Endothelial cell of umbilical vein (primary cell): ENCODE measurements at regions of chr5 and their contacts with region 1.

Region 1: DNA sequence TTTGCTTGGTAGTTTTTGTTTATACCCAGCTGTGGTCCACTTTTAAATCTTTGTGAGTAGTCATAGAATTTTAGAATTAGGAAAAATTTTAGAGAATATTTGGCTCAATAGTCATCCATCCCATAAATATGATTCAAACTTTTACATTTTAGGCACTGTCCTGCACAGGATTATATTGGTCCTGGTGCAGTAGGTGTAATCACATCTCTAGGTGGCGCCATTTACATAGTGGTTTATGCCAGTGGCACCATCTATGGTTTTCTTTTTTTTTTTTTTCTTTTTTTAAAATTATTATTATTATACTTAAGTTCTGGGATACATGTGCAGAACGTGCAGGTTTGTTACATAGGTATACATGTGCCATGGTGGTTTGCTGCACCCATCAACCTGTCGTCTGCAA is 260.7 kb upstream of the KCNN2 start:
- DNase-seq: peak; percentile 37
- H3K4me3 ChIP-seq: no peak overlapping the region
- H3K27ac ChIP-seq: no peak overlapping the region
- H3K4me1 ChIP-seq: no peaks in the 10 kb centered on the region
- H3K27me3 ChIP-seq: no peaks in the 10 kb centered on the region
- CTCF ChIP-seq: peak; percentile 42 to 45
- POLR2A ChIP-seq: no peak

Region 2: GRCh38 chr5:113806250-113806649 is 294.9 kb before region 1 on chr5:
- CTCF ChIA-PET with region 1: interaction called, 3 read pairs
- POLR2A ChIA-PET with region 1: no interaction called
- dilution Hi-C with region 1: no loop called
- intact Hi-C with region 1: loop called (anchors 1 kb)
- DNase-seq: peak; percentile 71
- H3K4me3 ChIP-seq: peak overlapping the region in 1 of 3 experiments; percentile 24
- H3K27ac ChIP-seq: peak overlapping the region; percentile 2
- H3K4me1 ChIP-seq: peaks cover 14% of the 10 kb centered on the region
- H3K27me3 ChIP-seq: no peaks in the 10 kb centered on the region
- CTCF ChIP-seq: peak; percentile 34 to 38
- POLR2A ChIP-seq: no peak

Region 3: DNA sequence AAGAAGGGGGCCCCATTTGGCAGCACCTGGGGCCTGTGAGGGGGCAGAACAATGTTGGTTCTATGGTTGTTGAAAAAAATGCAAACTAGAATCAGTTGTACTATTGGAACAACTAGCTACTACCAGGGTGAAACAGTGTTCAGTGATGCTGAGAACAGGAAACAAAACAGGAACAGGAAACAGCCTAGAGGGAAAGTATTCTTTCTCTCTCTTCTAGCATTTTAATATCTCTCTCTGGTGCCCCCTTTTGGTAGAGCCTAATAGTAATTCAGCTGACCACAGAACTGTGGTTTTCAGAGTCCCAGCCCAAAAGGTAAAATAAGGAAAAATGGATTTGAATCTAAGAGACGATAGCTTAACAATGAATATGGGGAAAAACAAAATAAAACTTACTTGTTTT is 122.7 kb after region 1 on chr5:
- CTCF ChIA-PET with region 1: interaction called, 8 read pairs
- POLR2A ChIA-PET with region 1: no interaction called
- dilution Hi-C with region 1: no loop called
- intact Hi-C with region 1: loop called (anchors 1 kb)
- DNase-seq: peak; percentile 53
- H3K4me3 ChIP-seq: no peak overlapping the region
- H3K27ac ChIP-seq: no peak overlapping the region
- H3K4me1 ChIP-seq: no peaks in the 10 kb centered on the region
- H3K27me3 ChIP-seq: no peaks in the 10 kb centered on the region
- CTCF ChIP-seq: peak; percentile 41 to 53
- POLR2A ChIP-seq: no peak

Region 4: GRCh38 chr5:114305402-114306211 is 204.5 kb after region 1 on chr5:
- CTCF ChIA-PET with region 1: interaction called, 5 read pairs
- POLR2A ChIA-PET with region 1: no interaction called
- dilution Hi-C with region 1: no loop called
- intact Hi-C with region 1: loop called (anchors 1 kb)
- DNase-seq: peak; percentile 41
- H3K4me3 ChIP-seq: no peak overlapping the region
- H3K27ac ChIP-seq: no peak overlapping the region
- H3K4me1 ChIP-seq: no peaks in the 10 kb centered on the region
- H3K27me3 ChIP-seq: peaks cover 4 to 5% of the 10 kb centered on the region in 2 experiments
- CTCF ChIP-seq: peak in 1 of 2 donors; percentile 32
- POLR2A ChIP-seq: no peak

Region 5: GRCh38 chr5:114361724-114362196 is 260.6 kb after region 1 on chr5 and contains the start of gene KCNN2:
- CTCF ChIA-PET with region 1: interaction called, 22 read pairs
- POLR2A ChIA-PET with region 1: no interaction called
- dilution Hi-C with region 1: no loop called
- intact Hi-C with region 1: loop called (anchors 2 kb)
- DNase-seq: peak; percentile 71
- H3K4me3 ChIP-seq: peak within 1 kb of the TSS; percentile 13 to 49 (median 28)
- H3K27ac ChIP-seq: no peak within 1 kb of the TSS
- H3K4me1 ChIP-seq: peaks cover 8% of the 10 kb centered on the region
- H3K27me3 ChIP-seq: peaks cover 37 to 66% of the 10 kb centered on the region in 2 experiments
- CTCF ChIP-seq: no peak
- POLR2A ChIP-seq: no peak
- total RNA-seq, gene KCNN2: 1.3 and 1.9 TPM in 2 replicates

Region 6: DNA sequence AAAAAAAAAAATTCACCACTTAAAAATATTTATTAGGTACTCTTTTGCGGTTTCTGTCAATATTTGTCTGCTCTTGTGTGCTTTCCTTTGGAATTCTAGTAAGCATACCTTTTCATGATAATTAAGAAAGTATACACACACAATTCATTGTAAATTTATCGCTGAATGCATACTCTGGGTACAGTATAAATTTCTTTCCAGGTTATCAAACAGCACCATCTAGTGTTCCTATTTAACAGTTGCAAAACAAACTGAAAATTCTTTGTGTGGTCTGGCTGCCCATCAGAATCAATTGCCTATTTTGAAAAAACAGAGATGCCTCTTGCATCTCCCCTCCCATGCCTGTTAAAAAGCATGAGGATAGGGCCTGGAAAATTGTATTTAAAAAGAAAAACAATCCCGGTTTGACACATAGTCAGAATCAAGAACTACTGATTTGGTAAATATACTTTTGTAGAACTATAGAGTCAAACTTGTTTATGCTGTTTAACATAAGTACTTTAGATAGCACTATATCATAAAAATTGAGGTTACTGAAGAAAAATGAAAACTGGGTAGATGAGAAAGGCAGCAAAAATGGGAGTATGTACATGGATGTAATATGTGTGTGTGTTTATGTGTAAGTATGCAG is 1145.3 kb after region 1 on chr5:
- CTCF ChIA-PET with region 1: no interaction called
- POLR2A ChIA-PET with region 1: no interaction called
- dilution Hi-C with region 1: no loop called
- intact Hi-C with region 1: loop called (anchors 10 kb)
- DNase-seq: peak; percentile 49
- H3K4me3 ChIP-seq: no peak overlapping the region
- H3K27ac ChIP-seq: no peak overlapping the region
- H3K4me1 ChIP-seq: no peaks in the 10 kb centered on the region
- H3K27me3 ChIP-seq: no peaks in the 10 kb centered on the region
- CTCF ChIP-seq: peak; percentile 34 to 37
- POLR2A ChIP-seq: no peak